Ascending aorta (tissue), 2 donors: ENCODE measurements at regions of chr13 and their contacts with region 1.

Region 1: GRCh38 chr13:113296842-113297369 is at the start of gene LAMP1:
- DNase-seq: peak; percentile 91 to 100
- H3K4me3 ChIP-seq: peak within 1 kb of the TSS; percentile 93 to 95
- H3K27ac ChIP-seq: peak within 1 kb of the TSS; percentile 67 to 73
- H3K4me1 ChIP-seq: peaks cover 0 to 7% of the 10 kb centered on the region in 2 donors
- H3K27me3 ChIP-seq: no peaks in the 10 kb centered on the region
- CTCF ChIP-seq: peak in 1 of 3 experiments; percentile 25
- total RNA-seq, gene LAMP1: 126 TPM

Region 2: DNA sequence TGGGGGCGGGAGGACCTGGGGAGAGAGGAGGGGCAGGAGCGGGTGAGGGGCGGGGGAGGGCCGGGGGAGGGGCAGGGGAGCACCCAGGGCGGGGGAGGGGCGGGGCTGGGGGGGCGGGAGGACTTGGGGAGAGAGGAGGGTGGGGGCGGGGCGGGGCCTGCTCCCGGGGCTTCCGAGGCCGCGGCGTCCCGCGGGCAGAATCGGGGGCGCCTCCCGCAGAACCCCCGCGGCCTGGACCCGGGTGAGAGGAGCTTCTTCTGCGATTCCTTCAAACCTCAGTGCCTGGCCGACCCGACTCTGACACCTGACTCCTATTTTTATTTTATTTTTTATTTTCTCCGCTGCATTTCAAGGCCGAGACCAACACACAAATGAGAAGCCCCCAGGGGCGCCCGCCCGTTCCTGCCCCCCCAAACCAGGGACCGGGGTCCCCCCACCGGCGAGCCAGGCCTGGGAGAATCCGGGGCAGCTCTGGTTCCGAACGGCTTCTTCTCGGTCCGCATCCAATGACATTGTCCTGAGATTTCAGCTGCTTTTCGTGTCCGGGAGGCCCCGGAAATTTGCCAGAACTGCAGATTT is 67.5 kb after region 1 on chr13:
- intact Hi-C with region 1: loop called (anchors 5 kb)
- DNase-seq: peak in 1 of 2 donors; percentile 61
- H3K4me3 ChIP-seq: peak overlapping the region; percentile 45 to 85
- H3K27ac ChIP-seq: peak overlapping the region in 1 of 2 donors; percentile 44
- H3K4me1 ChIP-seq: peaks cover 7 to 8% of the 10 kb centered on the region in 2 donors
- H3K27me3 ChIP-seq: peaks cover 5% of the 10 kb centered on the region
- CTCF ChIP-seq: no peak

Region 3: DNA sequence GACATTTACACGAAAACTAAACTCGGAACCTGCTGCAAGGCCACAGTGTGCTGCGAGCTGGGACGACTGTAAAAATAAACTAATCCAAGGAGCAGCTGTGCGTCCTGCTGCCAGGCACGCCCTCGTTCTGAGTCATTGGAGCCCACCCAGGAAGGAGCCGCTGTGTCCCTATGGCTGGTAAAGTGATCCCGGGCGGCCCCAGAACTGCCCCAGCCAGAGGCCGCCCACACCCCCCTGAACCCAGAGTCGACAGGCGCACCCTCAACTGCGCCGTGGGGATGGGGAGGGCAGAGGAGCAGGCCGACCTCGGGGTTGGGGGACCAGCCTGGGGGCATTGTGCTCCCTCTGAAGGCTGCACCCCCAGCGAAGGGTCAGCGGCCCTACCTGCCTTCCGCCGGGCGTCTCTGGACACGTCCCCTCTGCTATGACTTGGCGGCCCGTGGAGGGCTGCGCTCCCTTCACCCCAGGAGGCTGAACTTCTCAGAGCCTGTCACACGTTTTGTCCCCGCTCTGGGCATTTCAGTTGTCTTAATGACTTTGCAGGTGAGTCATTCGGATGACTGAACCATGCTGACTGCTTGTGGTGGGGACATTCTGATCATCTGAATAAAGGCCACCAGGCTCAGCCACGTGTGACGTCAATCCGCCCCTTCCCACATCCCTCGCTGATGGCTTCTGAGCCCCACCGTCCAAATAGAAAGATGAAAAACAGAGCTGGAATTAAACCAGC is 113.7 kb after region 1 on chr13:
- intact Hi-C with region 1: loop called (anchors 5 kb)
- DNase-seq: peak; percentile 35 to 92
- H3K4me3 ChIP-seq: peak overlapping the region in 1 of 2 donors; percentile 31
- H3K27ac ChIP-seq: peak overlapping the region; percentile 84 to 97
- H3K4me1 ChIP-seq: peaks cover 15 to 39% of the 10 kb centered on the region in 2 donors
- H3K27me3 ChIP-seq: no peaks in the 10 kb centered on the region
- CTCF ChIP-seq: no peak